ENCODE measurements at regions of chr7 and their contacts with region 1.

Region 1: DNA sequence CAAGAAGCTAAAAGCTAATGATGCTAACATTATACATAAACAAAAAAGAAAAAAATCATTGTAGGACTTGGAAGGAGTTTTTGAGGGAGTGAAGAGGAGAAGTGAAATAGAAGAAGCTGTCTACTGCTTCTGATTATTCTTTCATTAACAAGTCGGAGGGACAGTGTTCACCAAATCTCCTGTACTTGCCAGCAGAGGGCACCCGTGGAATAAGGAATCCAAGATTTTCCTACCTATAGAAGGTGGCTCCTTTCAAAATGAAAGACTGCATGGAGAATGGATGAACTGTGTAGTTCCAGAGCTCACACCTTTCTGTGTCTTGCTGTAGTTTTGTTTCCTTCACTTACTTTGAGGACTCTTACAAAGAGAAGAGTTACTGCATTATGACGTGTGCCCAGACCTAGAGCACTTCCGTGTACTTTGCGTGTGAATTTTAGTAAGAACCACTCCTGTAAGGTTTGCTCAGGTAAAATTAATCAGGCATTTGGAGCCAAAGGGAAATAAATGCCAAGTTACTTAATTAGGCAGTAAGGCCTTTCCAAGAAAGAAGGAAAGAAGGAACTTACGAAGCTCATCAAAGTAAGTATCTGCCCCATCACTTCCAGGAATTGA is 145.1 kb downstream of the SEMA3D start:
- DNase-seq: peak; percentile 83
- H3K4me3 ChIP-seq: no peak overlapping the region
- H3K27ac ChIP-seq: no peak overlapping the region
- H3K4me1 ChIP-seq: no peaks in the 10 kb centered on the region
- H3K27me3 ChIP-seq: no peaks in the 10 kb centered on the region
- CTCF ChIP-seq: peak; percentile 60 to 70
- POLR2A ChIP-seq: no peak

Region 2: GRCh38 chr7:85030893-85031292 is 10.8 kb before region 1 on chr7:
- CTCF ChIA-PET with region 1: interaction called, 24 read pairs
- POLR2A ChIA-PET with region 1: no interaction called
- dilution Hi-C with region 1: no loop called
- intact Hi-C with region 1: no loop called
- DNase-seq: peak; percentile 50
- H3K4me3 ChIP-seq: no peak overlapping the region
- H3K27ac ChIP-seq: no peak overlapping the region
- H3K4me1 ChIP-seq: peaks cover 2% of the 10 kb centered on the region
- H3K27me3 ChIP-seq: no peaks in the 10 kb centered on the region
- CTCF ChIP-seq: peak; percentile 17 to 19
- POLR2A ChIP-seq: no peak

Region 3: DNA sequence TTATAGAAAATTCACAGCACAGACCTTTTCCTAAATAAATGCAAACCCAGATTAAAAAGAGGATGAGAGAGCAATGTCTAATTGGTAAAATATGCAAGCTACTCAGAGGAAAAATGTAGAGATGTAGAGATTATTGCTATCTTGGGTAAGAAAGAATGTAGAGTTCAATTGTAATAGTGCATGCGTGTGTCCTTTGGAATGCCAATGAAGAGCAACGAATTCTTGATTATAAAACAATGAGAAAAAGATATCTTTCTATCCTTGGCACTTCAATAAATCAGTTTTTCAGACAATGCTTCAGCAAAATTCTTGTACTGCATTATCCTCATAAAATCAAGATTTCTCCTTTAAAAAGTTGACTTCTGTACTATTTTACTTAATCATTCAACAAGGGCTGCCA is 94.3 kb after region 1 on chr7:
- CTCF ChIA-PET with region 1: interaction called, 4 read pairs
- POLR2A ChIA-PET with region 1: no interaction called
- dilution Hi-C with region 1: no loop called
- intact Hi-C with region 1: loop called (anchors 5 kb)
- DNase-seq: peak; percentile 66
- H3K4me3 ChIP-seq: no peak overlapping the region
- H3K27ac ChIP-seq: peak overlapping the region; percentile 59
- H3K4me1 ChIP-seq: peaks cover 18% of the 10 kb centered on the region
- H3K27me3 ChIP-seq: no peaks in the 10 kb centered on the region
- CTCF ChIP-seq: no peak
- POLR2A ChIP-seq: peak; percentile 62

Region 4: GRCh38 chr7:85464042-85464651 is 422.4 kb after region 1 on chr7:
- CTCF ChIA-PET with region 1: interaction called, 49 read pairs
- POLR2A ChIA-PET with region 1: no interaction called
- dilution Hi-C with region 1: no loop called
- intact Hi-C with region 1: no loop called
- DNase-seq: peak; percentile 13
- H3K4me3 ChIP-seq: no peak overlapping the region
- H3K27ac ChIP-seq: no peak overlapping the region
- H3K4me1 ChIP-seq: no peaks in the 10 kb centered on the region
- H3K27me3 ChIP-seq: no peaks in the 10 kb centered on the region
- CTCF ChIP-seq: no peak
- POLR2A ChIP-seq: no peak

Region 5: GRCh38 chr7:85750454-85750949 is 708.8 kb after region 1 on chr7:
- CTCF ChIA-PET with region 1: interaction called, 9 read pairs
- POLR2A ChIA-PET with region 1: no interaction called
- dilution Hi-C with region 1: no loop called
- intact Hi-C with region 1: loop called (anchors 1 kb)
- DNase-seq: peak; percentile 44
- H3K4me3 ChIP-seq: no peak overlapping the region
- H3K27ac ChIP-seq: no peak overlapping the region
- H3K4me1 ChIP-seq: no peaks in the 10 kb centered on the region
- H3K27me3 ChIP-seq: peaks cover 2 to 5% of the 10 kb centered on the region in 2 experiments
- CTCF ChIP-seq: peak; percentile 74 to 79
- POLR2A ChIP-seq: no peak

Region 6: DNA sequence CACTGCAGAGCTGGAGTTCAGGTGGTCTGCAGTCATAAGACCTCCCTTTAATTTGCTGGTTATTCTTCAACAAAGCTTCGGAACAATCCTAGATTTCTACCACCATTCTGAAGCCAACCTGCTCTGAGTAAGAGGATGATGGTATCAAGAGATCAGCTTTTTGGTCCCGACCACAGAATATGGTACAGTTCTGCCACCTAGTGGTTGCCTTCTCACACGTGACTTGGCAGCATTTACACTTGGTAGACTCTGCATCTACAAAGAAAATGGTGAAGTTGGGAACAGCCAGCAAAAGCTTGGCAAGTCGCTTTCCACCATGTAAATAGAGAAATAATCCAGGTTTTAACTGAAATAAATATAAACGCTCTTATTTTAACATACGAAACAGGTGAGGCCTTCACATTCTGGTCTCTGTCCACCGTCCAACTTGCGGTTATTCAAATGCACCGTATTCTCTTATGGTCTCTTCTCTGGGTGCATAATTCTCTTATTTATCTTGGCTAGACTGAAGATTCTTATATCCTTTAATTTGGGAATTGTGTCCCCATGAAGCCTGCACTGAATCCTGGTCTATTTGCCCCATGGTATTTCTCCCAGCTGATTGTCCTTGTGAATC is 1428.1 kb after region 1 on chr7:
- CTCF ChIA-PET with region 1: no interaction called
- POLR2A ChIA-PET with region 1: no interaction called
- dilution Hi-C with region 1: no loop called
- intact Hi-C with region 1: loop called (anchors 5 kb)
- DNase-seq: peak; percentile 63
- H3K4me3 ChIP-seq: no peak overlapping the region
- H3K27ac ChIP-seq: no peak overlapping the region
- H3K4me1 ChIP-seq: no peaks in the 10 kb centered on the region
- H3K27me3 ChIP-seq: no peaks in the 10 kb centered on the region
- CTCF ChIP-seq: peak; percentile 64 to 73
- POLR2A ChIP-seq: no peak